ENCODE measurements at regions of chr10 and their contacts with region 1.

Region 1: DNA sequence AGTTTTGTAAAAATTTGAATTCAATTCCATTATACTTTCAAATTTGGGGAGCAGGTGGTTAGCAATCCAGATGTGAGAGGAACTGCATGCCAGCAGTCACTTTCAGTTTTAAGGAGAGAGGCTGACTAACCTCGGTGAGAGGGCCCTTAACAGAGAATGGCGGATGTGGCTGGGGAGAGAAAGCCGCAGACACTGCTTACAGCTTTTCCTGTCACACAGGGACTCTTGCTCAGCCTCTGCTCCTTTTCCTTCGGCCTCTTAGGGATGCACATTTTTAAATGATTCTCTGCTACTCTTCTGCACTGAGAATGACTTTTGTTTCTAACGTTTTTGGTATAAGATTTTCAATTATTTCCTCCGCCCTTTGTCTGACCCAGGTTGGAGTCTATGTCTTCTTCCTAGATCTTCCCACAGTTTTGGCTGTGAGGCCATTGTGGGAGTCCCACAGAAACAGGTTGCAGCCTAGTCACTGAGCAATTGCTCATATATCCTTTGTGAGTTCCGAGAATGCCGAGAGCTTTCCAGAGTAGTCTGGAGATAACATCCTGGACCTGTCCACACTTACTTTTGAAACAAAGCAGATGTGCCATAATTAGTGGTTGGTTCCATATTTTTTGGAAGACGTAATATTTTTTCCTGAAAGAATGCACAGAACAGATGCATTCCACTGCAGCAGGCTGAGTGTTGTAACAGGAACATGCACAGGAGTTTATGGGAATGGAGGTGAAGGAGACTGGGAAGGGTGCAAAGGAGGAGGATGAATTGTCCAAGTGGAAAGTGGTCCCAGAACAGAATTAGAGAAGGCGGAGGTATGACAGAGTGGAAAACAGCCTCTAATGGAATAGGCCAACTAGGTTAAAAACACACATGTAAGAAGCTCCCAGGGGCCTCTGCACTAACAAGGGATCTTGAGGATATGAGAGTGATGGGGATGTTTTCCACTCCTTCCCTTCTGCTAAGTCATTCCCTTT is 168.0 kb upstream of the ZNF32 start:
- DNase-seq: peak; percentile 90
- ATAC-seq: peak; percentile 95
- H3K4me3 Mint-ChIP-seq: peak overlapping the region; percentile 16
- H3K27ac Mint-ChIP-seq: peak overlapping the region; percentile 80
- H3K4me1 Mint-ChIP-seq: peaks cover 41% of the 10 kb centered on the region
- H3K27me3 Mint-ChIP-seq: no peaks in the 10 kb centered on the region

Region 2: DNA sequence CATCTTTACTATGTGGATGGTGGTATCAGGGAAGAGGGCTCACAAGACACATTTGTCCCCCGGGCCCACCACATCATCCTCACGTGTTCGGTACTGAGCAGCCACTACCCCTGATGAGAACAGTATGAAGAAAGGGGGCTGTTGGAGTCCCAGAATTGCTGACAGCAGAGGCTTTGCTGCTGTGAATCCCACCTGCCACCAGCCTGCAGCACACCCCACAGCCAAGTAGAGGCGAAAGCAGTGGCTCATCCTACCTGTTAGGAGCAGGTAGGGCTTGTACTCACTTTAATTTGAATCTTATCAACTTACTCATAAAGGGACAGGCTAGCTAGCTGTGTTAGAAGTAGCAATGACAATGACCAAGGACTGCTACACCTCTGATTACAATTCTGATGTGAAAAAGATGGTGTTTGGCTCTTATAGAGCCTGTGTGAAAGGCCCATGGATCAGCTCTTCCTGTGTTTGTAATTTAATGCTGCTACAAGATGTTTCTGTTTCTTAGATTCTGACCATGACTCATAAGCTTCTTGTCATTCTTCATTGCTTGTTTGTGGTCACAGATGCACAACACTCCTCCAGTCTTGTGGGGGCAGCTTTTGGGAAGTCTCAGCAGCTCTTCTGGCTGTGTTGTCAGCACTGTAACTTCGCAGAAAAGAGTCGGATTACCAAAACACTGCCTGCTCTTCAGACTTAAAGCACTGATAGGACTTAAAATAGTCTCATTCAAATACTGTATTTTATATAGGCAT is 687.5 kb before region 1 on chr10:
- CTCF ChIA-PET with region 1: no interaction called
- POLR2A ChIA-PET with region 1: no interaction called
- intact Hi-C with region 1: loop called in 1 of 2 experiments (anchors 10 kb)
- DNase-seq: peak; percentile 67
- ATAC-seq: peak; percentile 89
- H3K4me3 Mint-ChIP-seq: no peak overlapping the region
- H3K27ac Mint-ChIP-seq: peak overlapping the region; percentile 73
- H3K4me1 Mint-ChIP-seq: peaks cover 25% of the 10 kb centered on the region
- H3K27me3 Mint-ChIP-seq: no peaks in the 10 kb centered on the region

Region 3: GRCh38 chr10:43377424-43377883 is 439.2 kb before region 1 on chr10:
- CTCF ChIA-PET with region 1: no interaction called
- POLR2A ChIA-PET with region 1: no interaction called
- intact Hi-C with region 1: no loop called
- DNase-seq: no peak
- ATAC-seq: no peak
- H3K4me3 Mint-ChIP-seq: no peak overlapping the region
- H3K27ac Mint-ChIP-seq: no peak overlapping the region
- H3K4me1 Mint-ChIP-seq: peaks cover 4% of the 10 kb centered on the region
- H3K27me3 Mint-ChIP-seq: no peaks in the 10 kb centered on the region

Region 4: GRCh38 chr10:43594944-43595589 is 221.6 kb before region 1 on chr10:
- CTCF ChIA-PET with region 1: no interaction called
- POLR2A ChIA-PET with region 1: no interaction called
- intact Hi-C with region 1: loop called in 1 of 2 experiments (anchors 5 kb)
- DNase-seq: peak; percentile 69
- ATAC-seq: peak; percentile 80
- H3K4me3 Mint-ChIP-seq: peak overlapping the region; percentile 42
- H3K27ac Mint-ChIP-seq: peak overlapping the region; percentile 76
- H3K4me1 Mint-ChIP-seq: peaks cover 26% of the 10 kb centered on the region
- H3K27me3 Mint-ChIP-seq: peaks cover 5% of the 10 kb centered on the region

Region 5: GRCh38 chr10:43771675-43772074 is 45.0 kb before region 1 on chr10:
- CTCF ChIA-PET with region 1: no interaction called
- POLR2A ChIA-PET with region 1: no interaction called
- intact Hi-C with region 1: no loop called
- DNase-seq: no peak
- ATAC-seq: no peak
- H3K4me3 Mint-ChIP-seq: no peak overlapping the region
- H3K27ac Mint-ChIP-seq: no peak overlapping the region
- H3K4me1 Mint-ChIP-seq: no peaks in the 10 kb centered on the region
- H3K27me3 Mint-ChIP-seq: peaks cover 3% of the 10 kb centered on the region

Region 6: DNA sequence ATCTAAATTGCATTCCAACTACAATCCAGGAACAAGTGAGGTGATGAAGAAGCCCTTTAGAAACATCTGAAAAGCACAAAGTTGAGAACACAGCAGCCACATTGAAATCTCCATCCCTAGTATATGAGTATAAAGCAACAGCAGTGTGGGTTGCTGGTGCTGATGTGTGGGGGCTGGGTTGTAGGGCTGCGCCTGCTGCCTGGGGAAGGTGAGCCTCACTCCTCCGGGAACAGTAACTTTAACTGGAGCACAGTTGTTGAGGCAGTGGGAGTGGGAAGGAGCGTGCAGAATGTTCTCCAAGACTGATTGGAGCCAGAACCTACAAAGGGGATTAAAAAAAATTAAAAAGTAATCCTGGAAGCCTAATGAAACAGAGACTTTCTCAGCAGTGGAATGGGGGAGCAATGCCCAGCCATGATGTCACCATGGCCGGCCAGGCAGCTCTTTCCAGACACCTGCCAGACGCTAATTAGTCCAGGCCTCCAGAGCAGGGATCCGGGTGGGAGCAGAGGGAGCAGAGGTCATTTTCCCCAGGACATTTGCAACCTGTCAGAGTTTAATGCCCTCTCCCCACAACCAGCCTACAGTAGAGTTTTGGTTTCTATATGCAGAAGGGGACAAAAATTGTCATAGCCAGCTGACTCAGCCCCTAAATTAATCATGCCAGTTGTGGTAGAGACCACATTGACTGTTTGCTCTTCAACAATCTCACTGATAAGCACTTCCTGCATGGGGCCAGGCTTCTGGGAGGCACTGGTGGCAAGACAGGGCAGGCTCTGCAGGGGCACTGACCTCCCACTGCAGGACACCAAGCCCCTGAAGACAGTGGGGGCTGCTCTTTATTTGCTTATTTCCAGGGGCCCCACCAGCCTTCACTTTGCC is 34.9 kb before region 1 on chr10:
- CTCF ChIA-PET with region 1: no interaction called
- POLR2A ChIA-PET with region 1: no interaction called
- intact Hi-C with region 1: loop called (anchors 1 to 2 kb)
- DNase-seq: peak; percentile 63
- ATAC-seq: peak; percentile 94
- H3K4me3 Mint-ChIP-seq: no peak overlapping the region
- H3K27ac Mint-ChIP-seq: no peak overlapping the region
- H3K4me1 Mint-ChIP-seq: peaks cover 23% of the 10 kb centered on the region
- H3K27me3 Mint-ChIP-seq: no peaks in the 10 kb centered on the region

Region 7: GRCh38 chr10:43857206-43857930 is 40.7 kb after region 1 on chr10:
- CTCF ChIA-PET with region 1: no interaction called
- POLR2A ChIA-PET with region 1: no interaction called
- intact Hi-C with region 1: no loop called
- DNase-seq: no peak
- ATAC-seq: no peak
- H3K4me3 Mint-ChIP-seq: no peak overlapping the region
- H3K27ac Mint-ChIP-seq: no peak overlapping the region
- H3K4me1 Mint-ChIP-seq: peaks cover 5% of the 10 kb centered on the region
- H3K27me3 Mint-ChIP-seq: peaks cover 2% of the 10 kb centered on the region

Measured in activated CD4-positive, alpha-beta T cell treated with anti-CD3 and anti-CD28 coated beads for 36 hours (primary cell).